Ovary (tissue), 10 donors: ENCODE measurements at regions of chr15 and their contacts with region 1.

Region 1: DNA sequence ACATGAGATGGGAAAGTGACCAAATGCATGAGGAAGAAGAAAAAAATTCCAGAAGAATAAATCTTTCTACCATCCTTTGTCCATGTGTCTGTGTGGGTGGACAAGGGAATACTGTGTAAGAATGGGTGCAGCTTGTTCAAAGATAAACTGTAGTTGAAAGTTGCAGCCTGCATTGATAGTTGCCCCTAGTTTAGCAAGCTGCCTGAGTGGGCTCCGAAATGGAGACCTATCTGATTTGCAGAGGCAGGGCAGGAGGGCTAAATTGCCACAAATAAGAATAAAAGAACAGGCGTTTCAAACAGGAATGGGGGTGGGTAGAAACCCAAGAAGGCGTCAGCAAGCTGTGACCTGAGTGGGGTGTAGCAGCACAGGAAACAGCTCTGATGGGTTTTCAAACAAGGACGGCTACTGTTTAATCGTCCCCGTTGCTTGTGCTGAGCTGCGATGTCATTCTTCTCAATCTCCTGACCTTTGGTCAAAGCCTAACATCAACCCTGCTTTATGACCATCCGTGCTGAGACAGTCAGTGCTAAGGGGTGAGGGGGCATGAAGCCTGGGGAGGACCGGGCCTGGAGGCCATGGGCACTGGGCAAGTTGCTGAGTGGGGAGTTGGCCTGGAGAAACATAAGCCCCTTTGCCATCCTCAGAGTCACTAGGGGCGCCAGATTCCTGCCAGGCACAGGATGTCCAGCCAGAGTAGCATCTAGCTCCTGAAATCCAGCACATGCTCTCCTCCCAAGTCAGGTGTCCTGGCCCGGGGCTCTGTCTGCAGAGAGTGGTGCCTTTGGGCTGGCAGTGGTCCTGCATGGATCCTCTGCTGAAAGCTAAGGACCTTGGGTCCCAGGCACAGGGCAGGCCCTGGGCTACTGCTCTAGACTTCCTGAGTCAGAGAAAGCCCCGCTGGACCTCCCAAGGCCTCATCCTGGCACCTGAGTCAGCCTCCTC is 19.2 kb upstream of the C15orf39 start:
- DNase-seq: peak in 3 of 5 donors; percentile 28 to 53 (median 36)
- H3K4me3 ChIP-seq: no peak overlapping the region
- H3K27ac ChIP-seq: peak overlapping the region in 1 of 2 donors; percentile 51
- H3K4me1 ChIP-seq: peaks cover 31% of the 10 kb centered on the region
- H3K27me3 ChIP-seq: no peaks in the 10 kb centered on the region
- CTCF ChIP-seq: no peak
- EP300 ChIP-seq: no peak
- POLR2A ChIP-seq: no peak

Region 2: GRCh38 chr15:74799856-74800547 is 382.5 kb before region 1 on chr15:
- intact Hi-C with region 1: no loop called
- DNase-seq: peak in 4 of 5 donors; percentile 59 to 75 (median 66)
- H3K4me3 ChIP-seq: no peak overlapping the region
- H3K27ac ChIP-seq: no peak overlapping the region
- H3K4me1 ChIP-seq: no peaks in the 10 kb centered on the region
- H3K27me3 ChIP-seq: no peaks in the 10 kb centered on the region
- CTCF ChIP-seq: peak; percentile 60 to 68 (median 68)
- EP300 ChIP-seq: no peak
- POLR2A ChIP-seq: no peak

Region 3: GRCh38 chr15:75130597-75131268 is 51.7 kb before region 1 on chr15:
- intact Hi-C with region 1: loop called in 1 of 4 experiments (anchors 5 kb)
- DNase-seq: no peak
- H3K4me3 ChIP-seq: no peak overlapping the region
- H3K27ac ChIP-seq: no peak overlapping the region
- H3K4me1 ChIP-seq: no peaks in the 10 kb centered on the region
- H3K27me3 ChIP-seq: no peaks in the 10 kb centered on the region
- CTCF ChIP-seq: no peak
- EP300 ChIP-seq: no peak
- POLR2A ChIP-seq: no peak

Region 4: DNA sequence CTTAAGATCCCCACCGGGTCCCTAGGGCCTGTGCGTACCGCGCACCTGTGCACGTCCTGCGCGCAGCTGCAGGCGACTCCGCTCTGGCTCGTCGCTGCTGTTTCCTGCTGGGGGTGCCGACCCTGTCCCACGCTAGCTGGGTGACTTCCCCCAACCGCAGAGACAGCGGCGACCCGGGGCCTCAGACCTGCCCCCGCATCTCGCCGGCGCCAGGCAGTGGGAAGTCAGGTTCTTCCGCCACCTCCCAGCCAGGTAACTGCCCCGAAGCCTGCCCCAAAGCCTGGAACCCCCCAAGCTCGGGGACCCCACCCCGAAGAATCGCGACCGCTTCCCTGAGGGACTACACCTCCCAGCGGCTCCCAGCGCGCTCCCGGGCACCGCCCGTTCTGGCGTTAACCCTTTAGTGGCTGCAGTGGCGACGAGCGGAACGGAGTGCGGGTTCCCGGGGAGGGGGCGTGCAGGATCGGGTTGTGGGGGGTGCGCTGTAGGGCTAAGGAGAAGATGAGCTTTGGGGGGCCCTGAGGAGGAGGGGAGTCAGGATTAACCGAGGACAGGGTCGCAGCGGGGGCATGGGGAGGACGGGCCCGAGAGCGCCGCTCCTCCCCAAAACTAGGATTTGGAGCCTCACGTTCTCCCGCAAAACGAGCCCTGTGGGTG is 164.9 kb after region 1 on chr15:
- intact Hi-C with region 1: no loop called
- DNase-seq: peak; percentile 62 to 78 (median 76)
- H3K4me3 ChIP-seq: peak overlapping the region; percentile 64
- H3K27ac ChIP-seq: peak overlapping the region in 1 of 2 donors; percentile 1
- H3K4me1 ChIP-seq: peaks cover 7% of the 10 kb centered on the region
- H3K27me3 ChIP-seq: no peaks in the 10 kb centered on the region
- CTCF ChIP-seq: no peak
- EP300 ChIP-seq: no peak
- POLR2A ChIP-seq: peak; percentile 24